Activated CD4-positive, alpha-beta T cell treated with anti-CD3 and anti-CD28 coated beads, Interleukin-2, amount 10 ng/mL, durations not matched to agents 24 days and 14 days (primary cell): ENCODE measurements at regions of chr2 and their contacts with region 1.

Region 1: GRCh38 chr2:175282290-175282689 is 100.8 kb upstream of the ATP5MC3 start:
- DNase-seq: no peak
- H3K4me3 Mint-ChIP-seq: no peak overlapping the region
- H3K27ac Mint-ChIP-seq: no peak overlapping the region
- H3K4me1 Mint-ChIP-seq: peaks cover 2% of the 10 kb centered on the region
- H3K27me3 Mint-ChIP-seq: peaks cover 31% of the 10 kb centered on the region

Region 2: GRCh38 chr2:174697255-174697654 is 585.0 kb before region 1 on chr2:
- intact Hi-C with region 1: loop called (anchors 10 kb)
- DNase-seq: peak; percentile 89
- H3K4me3 Mint-ChIP-seq: no peak overlapping the region
- H3K27ac Mint-ChIP-seq: no peak overlapping the region
- H3K4me1 Mint-ChIP-seq: peaks cover 6% of the 10 kb centered on the region
- H3K27me3 Mint-ChIP-seq: peaks cover 35% of the 10 kb centered on the region

Region 3: GRCh38 chr2:175036582-175037018 is 245.7 kb before region 1 on chr2:
- intact Hi-C with region 1: loop called (anchors 5 kb)
- DNase-seq: no peak
- H3K4me3 Mint-ChIP-seq: no peak overlapping the region
- H3K27ac Mint-ChIP-seq: peak overlapping the region; percentile 35
- H3K4me1 Mint-ChIP-seq: peaks cover 4% of the 10 kb centered on the region
- H3K27me3 Mint-ChIP-seq: peaks cover 3% of the 10 kb centered on the region

Region 4: GRCh38 chr2:175342085-175342484 is 59.8 kb after region 1 on chr2:
- intact Hi-C with region 1: no loop called
- DNase-seq: no peak
- H3K4me3 Mint-ChIP-seq: no peak overlapping the region
- H3K27ac Mint-ChIP-seq: no peak overlapping the region
- H3K4me1 Mint-ChIP-seq: no peaks in the 10 kb centered on the region
- H3K27me3 Mint-ChIP-seq: peaks cover 4% of the 10 kb centered on the region

Region 5: GRCh38 chr2:175439416-175439815 is 157.1 kb after region 1 on chr2:
- intact Hi-C with region 1: no loop called
- DNase-seq: no peak
- H3K4me3 Mint-ChIP-seq: no peak overlapping the region
- H3K27ac Mint-ChIP-seq: no peak overlapping the region
- H3K4me1 Mint-ChIP-seq: no peaks in the 10 kb centered on the region
- H3K27me3 Mint-ChIP-seq: no peaks in the 10 kb centered on the region